Endothelial cell of umbilical vein (primary cell): ENCODE measurements at regions of chr22 and their contacts with region 1.

Region 1: DNA sequence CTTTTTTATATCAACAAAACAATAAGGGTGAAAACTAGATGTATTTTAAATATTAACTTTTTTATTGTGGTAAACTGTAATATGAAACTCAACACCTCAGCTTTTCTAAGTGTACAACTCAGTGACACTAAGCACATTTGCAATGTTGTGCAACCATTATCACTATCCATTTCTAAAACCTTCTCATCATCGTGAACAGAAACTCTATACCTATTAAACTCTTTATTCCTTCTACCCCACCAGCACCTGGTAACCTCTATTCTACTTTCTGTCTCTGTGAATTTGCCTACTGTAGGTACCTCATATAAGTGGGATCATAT is 9.4 kb downstream of the HORMAD2 start:
- DNase-seq: no peak
- H3K4me3 ChIP-seq: no peak overlapping the region
- H3K27ac ChIP-seq: no peak overlapping the region
- H3K4me1 ChIP-seq: no peaks in the 10 kb centered on the region
- H3K27me3 ChIP-seq: peaks cover 4 to 10% of the 10 kb centered on the region in 2 experiments
- CTCF ChIP-seq: no peak
- POLR2A ChIP-seq: no peak

Region 2: DNA sequence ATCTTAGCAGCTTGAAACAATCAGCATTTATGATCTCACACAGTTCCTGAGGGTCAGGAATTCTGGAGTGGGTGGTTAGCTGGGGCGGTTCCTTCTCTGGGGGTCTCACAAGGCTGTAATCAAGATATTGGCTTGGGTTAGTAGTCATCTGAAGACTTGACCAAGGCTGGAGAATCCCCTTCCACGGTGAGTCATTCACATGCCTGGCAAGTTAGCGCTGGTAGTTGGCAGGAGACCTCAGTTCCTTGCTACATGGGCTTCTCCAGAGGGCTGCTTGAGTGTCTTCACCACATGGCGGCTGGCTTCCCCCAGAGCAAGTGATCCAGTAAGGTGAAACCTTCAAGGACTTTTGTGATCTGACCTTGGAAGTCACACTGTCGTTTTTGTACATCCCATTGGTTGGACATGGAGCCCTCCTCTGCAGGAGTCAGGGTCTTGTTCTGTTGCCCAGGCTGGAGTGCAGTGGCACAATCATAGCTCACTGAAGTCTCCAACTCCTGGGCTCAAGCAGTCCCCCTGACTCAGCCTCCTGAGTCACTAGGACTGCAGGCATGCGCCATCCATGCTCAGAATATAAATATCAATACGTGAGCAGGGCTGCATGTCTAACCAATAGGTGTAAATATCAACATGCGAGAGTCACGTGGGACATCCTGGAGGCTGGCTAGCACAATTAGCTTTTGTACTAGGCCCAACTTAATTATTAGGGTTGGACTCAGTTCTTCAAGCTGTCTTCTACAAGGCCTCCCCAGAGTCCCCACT is 501.5 kb before region 1 on chr22:
- CTCF ChIA-PET with region 1: interaction called, 14 read pairs
- POLR2A ChIA-PET with region 1: no interaction called
- dilution Hi-C with region 1: no loop called
- intact Hi-C with region 1: loop called (anchors 2 kb)
- DNase-seq: peak; percentile 42
- H3K4me3 ChIP-seq: no peak overlapping the region
- H3K27ac ChIP-seq: no peak overlapping the region
- H3K4me1 ChIP-seq: no peaks in the 10 kb centered on the region
- H3K27me3 ChIP-seq: no peaks in the 10 kb centered on the region
- CTCF ChIP-seq: no peak
- POLR2A ChIP-seq: no peak

Region 3: GRCh38 chr22:29701155-29701999 is 388.2 kb before region 1 on chr22:
- CTCF ChIA-PET with region 1: interaction called, 27 read pairs
- POLR2A ChIA-PET with region 1: no interaction called
- dilution Hi-C with region 1: no loop called
- intact Hi-C with region 1: loop called (anchors 5 kb)
- DNase-seq: peak; percentile 22
- H3K4me3 ChIP-seq: no peak overlapping the region
- H3K27ac ChIP-seq: no peak overlapping the region
- H3K4me1 ChIP-seq: peaks cover 10% of the 10 kb centered on the region
- H3K27me3 ChIP-seq: peaks cover 15% of the 10 kb centered on the region in 2 experiments
- CTCF ChIP-seq: peak; percentile 8 to 36
- POLR2A ChIP-seq: no peak

Region 4: DNA sequence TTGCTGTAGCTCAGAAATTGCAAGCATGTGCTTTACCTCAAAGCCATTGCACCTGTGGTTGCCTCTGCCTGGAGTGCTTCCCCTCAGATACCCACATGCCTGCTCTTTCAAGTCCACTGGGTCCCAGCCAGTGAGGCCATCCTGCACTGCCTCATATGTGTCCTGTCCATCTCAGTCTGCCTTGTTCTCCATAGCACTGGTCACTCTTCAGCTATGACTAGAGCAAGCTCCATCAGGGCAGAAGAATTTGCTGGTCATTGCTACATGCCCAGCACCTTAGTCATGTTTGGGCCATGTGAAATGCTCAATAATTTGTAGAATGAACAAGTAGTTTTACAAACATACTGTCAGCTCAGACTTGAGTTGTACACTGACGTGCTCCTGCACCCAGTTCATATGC is 73.8 kb before region 1 on chr22:
- CTCF ChIA-PET with region 1: interaction called, 15 read pairs
- POLR2A ChIA-PET with region 1: no interaction called
- dilution Hi-C with region 1: no loop called
- intact Hi-C with region 1: no loop called
- DNase-seq: no peak
- H3K4me3 ChIP-seq: no peak overlapping the region
- H3K27ac ChIP-seq: no peak overlapping the region
- H3K4me1 ChIP-seq: peaks cover 5% of the 10 kb centered on the region
- H3K27me3 ChIP-seq: no peaks in the 10 kb centered on the region
- CTCF ChIP-seq: no peak
- POLR2A ChIP-seq: no peak